ENCODE measurements at regions of chr20 and their contacts with region 1.

Region 1: DNA sequence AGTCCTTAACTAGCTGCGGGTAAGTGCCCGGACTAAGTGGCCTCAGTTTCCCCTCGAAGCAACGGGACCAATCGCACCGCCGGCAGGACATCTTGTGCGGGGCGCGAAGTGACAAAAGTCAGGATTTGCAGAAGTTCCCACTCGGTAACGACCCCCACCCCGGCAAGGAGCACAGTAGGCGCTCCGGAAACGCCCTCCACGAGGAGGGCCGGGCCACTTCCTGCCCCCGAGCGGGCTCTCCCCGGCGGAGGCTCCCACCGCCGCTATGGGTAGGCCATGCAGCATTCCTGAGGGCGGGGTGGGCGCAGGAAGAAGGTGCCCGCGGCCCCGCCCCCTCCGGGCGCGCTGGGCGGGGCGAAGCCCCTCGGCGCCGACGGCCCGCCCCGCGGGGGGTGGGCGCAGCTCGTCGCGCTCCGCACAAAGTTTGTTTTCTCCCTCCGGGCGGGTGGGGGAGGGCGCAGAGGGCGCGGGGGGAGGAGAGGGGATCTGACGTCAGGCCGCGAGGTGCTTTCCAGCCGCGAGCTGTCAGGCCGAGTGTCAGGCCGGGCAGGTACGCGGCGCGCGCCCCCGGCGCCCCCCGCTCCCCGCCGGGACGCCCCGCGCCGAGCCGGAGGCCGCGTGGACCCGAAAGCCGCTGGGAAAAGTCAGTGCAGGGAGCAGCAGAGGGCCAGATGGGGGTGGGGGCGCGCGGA is at the start of gene TGIF2:
- DNase-seq: peak; percentile 92
- H3K4me3 ChIP-seq: peak within 1 kb of the TSS; percentile 89 to 97
- H3K27ac ChIP-seq: peak within 1 kb of the TSS; percentile 93
- H3K4me1 ChIP-seq: peaks cover 34% of the 10 kb centered on the region
- H3K27me3 ChIP-seq: no peaks in the 10 kb centered on the region
- CTCF ChIP-seq: no peak
- POLR2A ChIP-seq: no peak
- total RNA-seq, gene TGIF2: 34.3 to 37.2 TPM

Region 2: DNA sequence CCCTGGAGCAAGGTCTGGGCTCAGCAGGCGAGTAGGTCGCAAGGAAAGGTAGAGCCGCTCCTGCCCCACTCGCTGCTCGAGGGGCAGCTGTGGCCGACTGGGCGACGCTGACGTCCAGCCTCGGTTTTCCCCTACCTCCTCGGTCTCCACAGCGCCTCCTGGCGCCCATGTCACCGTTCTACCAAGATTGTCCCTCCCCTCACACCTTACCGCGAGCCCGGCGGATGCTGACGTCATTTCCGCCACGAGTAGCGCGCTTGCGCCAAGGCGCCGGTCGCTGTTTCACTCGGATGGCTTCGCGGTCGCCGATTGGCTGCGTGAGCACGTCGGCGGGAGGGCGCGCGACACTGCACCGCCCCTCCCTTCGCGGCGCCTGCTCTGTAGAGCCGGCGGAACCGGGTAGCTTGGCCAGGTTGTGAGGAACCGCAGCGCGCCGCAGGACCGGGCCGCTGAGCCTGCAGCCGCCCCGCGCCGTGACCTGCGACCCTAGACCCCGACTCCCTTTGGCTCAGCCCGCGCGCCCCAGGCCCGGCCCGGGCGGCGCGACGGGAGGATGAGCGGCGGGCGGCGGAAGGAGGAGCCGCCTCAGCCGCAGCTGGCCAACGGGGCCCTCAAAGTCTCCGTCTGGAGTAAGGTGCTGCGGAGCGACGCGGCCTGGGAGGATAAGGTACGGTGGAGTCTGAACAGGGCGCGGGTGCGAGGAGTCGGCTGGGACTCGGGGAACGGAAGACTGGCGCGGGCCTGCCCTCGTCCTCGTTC is 32.3 kb after region 1 on chr20 and contains the start of gene RAB5IF:
- intact Hi-C with region 1: loop called (anchors 5 kb)
- DNase-seq: peak; percentile 97
- H3K4me3 ChIP-seq: peak within 1 kb of the TSS; percentile 87 to 98
- H3K27ac ChIP-seq: peak within 1 kb of the TSS; percentile 35 to 87
- H3K4me1 ChIP-seq: peaks cover 12% of the 10 kb centered on the region
- H3K27me3 ChIP-seq: no peaks in the 10 kb centered on the region
- CTCF ChIP-seq: peak; percentile 90 to 99 (median 99)
- POLR2A ChIP-seq: no peak
- total RNA-seq, gene RAB5IF: 75.7 to 81.3 TPM